ENCODE measurements at regions of chr3 and their contacts with region 1.

Region 1: GRCh38 chr3:134600685-134601463 is 49.9 kb downstream of the KY start:
- DNase-seq: peak; percentile 92
- H3K4me3 ChIP-seq: peak overlapping the region in 1 of 4 donors; percentile 30
- H3K27ac ChIP-seq: no peak overlapping the region
- H3K4me1 ChIP-seq: peaks cover 0 to 9% (median 5%) of the 10 kb centered on the region in 4 donors
- H3K27me3 ChIP-seq: no peaks in the 10 kb centered on the region
- CTCF ChIP-seq: peak in 2 of 3 experiments; percentile 85 to 95
- EP300 ChIP-seq: no peak
- POLR2A ChIP-seq: no peak

Region 2: DNA sequence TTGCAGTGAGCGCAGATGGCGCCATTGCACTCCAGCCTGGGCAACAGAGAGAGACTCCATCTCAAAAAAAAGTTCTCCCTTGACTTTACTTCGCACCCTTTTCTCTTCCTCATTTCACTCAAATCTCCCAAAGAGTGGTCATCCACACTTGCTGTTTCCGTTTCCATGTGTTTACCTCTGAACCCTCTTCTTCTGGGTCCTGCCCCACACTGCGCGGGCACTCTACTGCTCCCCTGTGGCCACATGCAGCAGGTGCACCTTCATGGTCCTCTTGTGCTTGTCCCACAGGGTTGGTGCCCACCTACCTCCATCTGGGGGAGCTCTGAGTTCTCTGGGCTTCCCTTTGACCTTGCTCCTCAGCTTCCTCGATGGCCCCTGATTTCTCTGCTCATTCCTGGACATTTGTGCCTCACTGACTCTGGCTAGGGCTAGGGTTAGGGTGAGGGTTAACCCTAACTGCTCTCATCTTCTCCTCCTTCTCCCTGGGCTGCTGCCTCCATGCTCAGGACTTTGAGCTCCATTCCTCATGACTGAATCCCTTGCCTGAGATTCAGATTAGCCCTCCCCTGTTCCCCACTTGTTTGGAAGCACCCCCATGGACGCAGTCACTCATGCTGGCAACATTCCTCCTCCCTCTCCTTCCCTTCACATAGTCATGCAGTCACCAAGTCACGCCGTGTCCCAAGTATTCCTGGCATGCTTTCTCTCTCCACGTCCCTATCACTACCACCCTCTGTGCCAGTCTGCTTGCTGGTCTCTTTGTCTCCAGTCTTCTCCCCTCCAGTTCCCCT is 76.5 kb after region 1 on chr3:
- intact Hi-C with region 1: loop called (anchors 5 kb)
- DNase-seq: no peak
- H3K4me3 ChIP-seq: no peak overlapping the region
- H3K27ac ChIP-seq: no peak overlapping the region
- H3K4me1 ChIP-seq: peaks cover 0 to 12% (median 7%) of the 10 kb centered on the region in 4 donors
- H3K27me3 ChIP-seq: no peaks in the 10 kb centered on the region
- CTCF ChIP-seq: peak; percentile 42 to 57 (median 52)
- EP300 ChIP-seq: no peak
- POLR2A ChIP-seq: no peak

Region 3: DNA sequence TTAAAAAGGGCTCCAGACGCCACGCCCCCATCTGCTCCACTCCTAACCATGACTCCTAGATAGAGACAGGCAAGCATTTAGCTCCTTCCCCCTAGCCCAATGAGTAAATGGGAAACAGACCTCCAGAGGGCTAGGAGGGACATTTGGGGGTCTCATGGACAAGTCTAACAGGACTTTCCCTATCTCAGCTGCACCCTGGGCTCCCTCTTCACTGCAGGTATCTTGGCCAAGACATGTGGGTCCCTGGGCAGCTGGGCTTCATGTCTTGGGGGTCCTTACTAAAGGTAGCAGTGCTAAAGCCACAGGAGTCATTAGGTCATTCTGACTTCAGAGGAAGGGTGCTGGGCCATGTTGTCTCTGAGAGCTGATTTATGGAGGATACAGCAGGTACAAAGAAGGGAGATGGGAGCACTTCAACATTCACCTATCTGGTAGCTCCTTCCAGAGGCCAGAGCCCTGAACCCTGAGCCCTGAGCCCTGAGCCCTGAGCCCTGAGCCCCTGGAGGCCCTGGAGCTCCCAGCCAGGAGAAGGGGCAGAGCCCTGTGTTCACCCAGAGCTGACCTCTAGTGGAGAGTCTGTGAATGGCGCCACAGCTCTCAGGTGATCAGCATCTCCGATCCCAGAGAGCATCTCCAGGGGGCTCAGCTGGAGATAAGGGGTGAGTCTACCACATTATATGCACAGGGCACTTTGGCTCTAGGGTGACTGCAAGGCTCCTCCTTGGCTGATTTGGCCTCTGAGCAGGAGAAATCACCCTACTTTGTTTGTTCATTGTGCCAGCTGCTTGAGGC is 154.1 kb after region 1 on chr3:
- intact Hi-C with region 1: loop called (anchors 2 kb)
- DNase-seq: peak; percentile 91
- H3K4me3 ChIP-seq: no peak overlapping the region
- H3K27ac ChIP-seq: no peak overlapping the region
- H3K4me1 ChIP-seq: no peaks in the 10 kb centered on the region
- H3K27me3 ChIP-seq: no peaks in the 10 kb centered on the region
- CTCF ChIP-seq: peak; percentile 48 to 69 (median 52)
- EP300 ChIP-seq: no peak
- POLR2A ChIP-seq: no peak

Region 4: DNA sequence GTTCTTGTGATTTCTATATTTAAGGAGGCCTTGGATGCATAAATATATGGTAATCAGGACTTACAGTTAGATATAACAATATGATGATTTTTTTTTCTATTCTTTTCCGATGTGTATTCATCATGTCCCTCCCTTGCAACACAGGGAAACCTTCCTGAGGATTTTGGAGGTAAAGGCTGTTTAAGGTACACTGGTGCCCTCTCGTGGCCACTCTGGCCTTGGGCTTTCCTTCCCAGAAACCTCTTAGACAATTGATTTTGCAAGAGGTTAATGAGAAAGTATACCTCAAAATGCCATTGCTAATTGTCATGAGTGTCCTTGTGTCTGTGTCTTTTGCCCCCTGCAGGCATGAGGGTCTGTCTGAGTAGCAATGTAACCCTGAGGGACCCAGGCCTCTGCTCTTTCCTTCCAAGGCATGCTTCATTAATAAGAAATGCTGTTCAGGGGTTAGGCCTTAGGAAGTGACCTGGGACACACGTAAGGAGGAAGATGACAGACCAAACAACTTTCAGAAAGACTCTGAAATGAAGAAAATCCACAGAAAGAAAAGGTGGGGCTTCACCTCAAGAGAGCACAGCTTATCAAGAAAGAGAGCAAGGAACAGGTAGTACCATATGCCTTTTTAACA is 1294.3 kb after region 1 on chr3:
- intact Hi-C with region 1: loop called (anchors 5 kb)
- DNase-seq: no peak
- H3K4me3 ChIP-seq: no peak overlapping the region
- H3K27ac ChIP-seq: no peak overlapping the region
- H3K4me1 ChIP-seq: no peaks in the 10 kb centered on the region
- H3K27me3 ChIP-seq: no peaks in the 10 kb centered on the region
- CTCF ChIP-seq: peak; percentile 67 to 82 (median 81)
- EP300 ChIP-seq: no peak
- POLR2A ChIP-seq: no peak